Natural killer cell (primary cell): ENCODE measurements at regions of chr19 and their contacts with region 1.

Region 1: DNA sequence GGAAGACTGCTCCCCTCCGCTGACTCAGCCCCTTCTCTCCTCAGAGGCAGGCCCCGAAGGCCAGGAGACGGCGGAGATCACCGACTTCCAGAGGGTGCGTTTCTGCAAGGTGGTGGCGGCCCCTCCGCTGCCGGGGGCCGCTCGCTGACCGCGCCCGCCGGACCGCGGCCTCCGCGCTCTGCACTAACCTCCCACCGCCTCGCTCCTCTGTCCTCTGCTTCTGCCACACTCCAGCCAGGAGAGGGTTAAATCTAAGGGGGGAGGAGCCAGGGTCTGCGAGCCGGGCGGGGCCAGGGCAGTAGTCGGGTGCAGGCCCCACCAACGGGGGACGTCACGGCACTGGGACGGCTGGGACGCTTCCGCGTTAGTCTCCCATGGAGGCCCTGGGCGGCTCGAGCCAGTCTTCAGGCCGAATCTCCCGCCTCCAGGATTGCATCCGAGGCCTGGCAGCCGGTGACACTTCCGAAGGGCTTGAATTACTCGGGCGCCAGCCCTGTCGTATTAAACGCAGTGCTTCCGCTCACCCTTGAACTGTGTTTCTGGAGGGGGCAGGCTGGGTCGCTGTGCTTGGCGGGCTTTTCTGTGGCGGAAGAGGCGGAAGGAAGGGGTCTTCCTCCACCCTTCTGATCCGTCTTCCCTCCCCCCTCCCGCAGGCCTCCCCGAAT is 1.2 kb upstream of the INAFM1 start:
- DNase-seq: peak; percentile 86 to 93
- ATAC-seq: peak; percentile 60 to 76 (median 64)
- H3K4me3 ChIP-seq: peak overlapping the region; percentile 66
- H3K4me3 Mint-ChIP-seq: peak overlapping the region; percentile 95
- H3K27ac ChIP-seq: peak overlapping the region; percentile 85
- H3K27ac Mint-ChIP-seq: peak overlapping the region; percentile 93 to 96
- H3K4me1 ChIP-seq: peaks cover 23% of the 10 kb centered on the region
- H3K4me1 Mint-ChIP-seq: peaks cover 14 to 33% of the 10 kb centered on the region in 2 donors
- H3K27me3 ChIP-seq: no peaks in the 10 kb centered on the region
- H3K27me3 Mint-ChIP-seq: no peaks in the 10 kb centered on the region
- CTCF ChIP-seq: no peak

Region 2: GRCh38 chr19:46850228-46851203 is 422.9 kb before region 1 on chr19 and contains the start of gene AP2S1:
- intact Hi-C with region 1: loop called (anchors 10 kb)
- DNase-seq: peak; percentile 83 to 96
- ATAC-seq: peak; percentile 91 to 96 (median 91)
- H3K4me3 ChIP-seq: peak within 1 kb of the TSS; percentile 61
- H3K4me3 Mint-ChIP-seq: peak within 1 kb of the TSS; percentile 94
- H3K27ac ChIP-seq: peak within 1 kb of the TSS; percentile 36
- H3K27ac Mint-ChIP-seq: peak within 1 kb of the TSS; percentile 84 to 95
- H3K4me1 ChIP-seq: peaks cover 26% of the 10 kb centered on the region
- H3K4me1 Mint-ChIP-seq: peaks cover 17 to 29% of the 10 kb centered on the region in 2 donors
- H3K27me3 ChIP-seq: no peaks in the 10 kb centered on the region
- H3K27me3 Mint-ChIP-seq: no peaks in the 10 kb centered on the region
- CTCF ChIP-seq: no peak
- total RNA-seq, gene AP2S1: 45.0 to 49.1 (median 45.4) TPM

Region 3: GRCh38 chr19:47225746-47226425 is 47.6 kb before region 1 on chr19:
- intact Hi-C with region 1: loop called (anchors 5 kb)
- DNase-seq: peak; percentile 94 to 95
- ATAC-seq: peak; percentile 43 to 76 (median 66)
- H3K4me3 ChIP-seq: peak overlapping the region; percentile 47
- H3K4me3 Mint-ChIP-seq: peak overlapping the region; percentile 79
- H3K27ac ChIP-seq: peak overlapping the region; percentile 96
- H3K27ac Mint-ChIP-seq: no peak overlapping the region
- H3K4me1 ChIP-seq: peaks cover 45% of the 10 kb centered on the region
- H3K4me1 Mint-ChIP-seq: peaks cover 6 to 18% of the 10 kb centered on the region in 2 donors
- H3K27me3 ChIP-seq: no peaks in the 10 kb centered on the region
- H3K27me3 Mint-ChIP-seq: no peaks in the 10 kb centered on the region
- CTCF ChIP-seq: peak; percentile 26

Region 4: GRCh38 chr19:47256688-47257443 is 16.6 kb before region 1 on chr19:
- intact Hi-C with region 1: loop called (anchors 1 kb)
- DNase-seq: peak; percentile 98 to 99
- ATAC-seq: peak; percentile 81 to 91 (median 83)
- H3K4me3 ChIP-seq: peak overlapping the region; percentile 63
- H3K4me3 Mint-ChIP-seq: peak overlapping the region; percentile 95
- H3K27ac ChIP-seq: peak overlapping the region; percentile 98
- H3K27ac Mint-ChIP-seq: peak overlapping the region; percentile 94 to 98
- H3K4me1 ChIP-seq: peaks cover 28% of the 10 kb centered on the region
- H3K4me1 Mint-ChIP-seq: peaks cover 37 to 49% of the 10 kb centered on the region in 2 donors
- H3K27me3 ChIP-seq: no peaks in the 10 kb centered on the region
- H3K27me3 Mint-ChIP-seq: no peaks in the 10 kb centered on the region
- CTCF ChIP-seq: no peak

Region 5: DNA sequence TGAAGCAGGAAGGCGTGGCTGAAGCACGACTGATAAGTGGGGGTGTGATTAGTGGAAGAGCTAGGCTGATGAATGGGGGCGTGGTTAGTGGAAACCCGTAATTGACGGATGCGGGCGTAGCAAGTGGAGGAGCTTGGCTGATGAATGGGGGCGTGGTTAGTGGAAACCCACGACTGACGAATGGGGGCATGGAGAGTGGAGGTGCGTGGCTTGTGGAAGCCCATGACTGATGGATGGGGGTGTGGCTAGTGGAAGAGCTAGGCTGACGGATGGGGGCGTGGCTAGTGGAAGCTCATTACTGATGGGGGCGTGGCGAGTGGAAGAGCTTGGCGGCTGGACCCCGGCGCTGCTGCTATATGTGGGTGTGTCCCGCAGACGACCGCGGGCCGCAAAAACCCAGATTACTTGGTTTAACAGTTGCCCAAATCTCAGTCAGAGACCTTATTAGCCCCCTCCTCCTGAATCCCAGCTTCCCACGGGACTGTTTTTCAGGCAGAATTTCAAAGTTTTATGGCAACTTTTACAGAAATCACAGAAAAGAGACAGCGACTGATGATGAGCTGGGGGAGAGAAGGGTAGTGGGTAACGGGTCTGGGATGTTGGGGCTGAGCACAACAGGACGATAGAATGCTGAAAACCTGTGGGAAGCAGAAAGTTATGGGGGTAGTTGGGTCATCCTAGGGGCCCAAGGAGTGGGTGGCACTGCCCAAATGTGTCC is 154.9 kb after region 1 on chr19:
- intact Hi-C with region 1: no loop called
- DNase-seq: peak; percentile 49 to 94
- ATAC-seq: peak; percentile 79 to 83 (median 79)
- H3K4me3 ChIP-seq: no peak overlapping the region
- H3K4me3 Mint-ChIP-seq: no peak overlapping the region
- H3K27ac ChIP-seq: no peak overlapping the region
- H3K27ac Mint-ChIP-seq: no peak overlapping the region
- H3K4me1 ChIP-seq: peaks cover 25% of the 10 kb centered on the region
- H3K4me1 Mint-ChIP-seq: peaks cover 5 to 9% of the 10 kb centered on the region in 2 donors
- H3K27me3 ChIP-seq: peaks cover 35% of the 10 kb centered on the region
- H3K27me3 Mint-ChIP-seq: peaks cover 29 to 35% of the 10 kb centered on the region in 2 donors
- CTCF ChIP-seq: no peak